Head of caudate nucleus (tissue), 42 donors: ENCODE measurements at regions of chr22 and their contacts with region 1.

Region 1: GRCh38 chr22:24525416-24526037 is 29.4 kb downstream of the GUCD1 start:
- DNase-seq: peak in 41 of 42 donors; percentile 53 to 89 (median 74)

Region 2: GRCh38 chr22:24325105-24325757 is 200.3 kb before region 1 on chr22:
- intact Hi-C with region 1: loop called (anchors 10 kb)
- DNase-seq: peak in 13 of 42 donors; percentile 15 to 65 (median 27)

Region 3: GRCh38 chr22:24433813-24434470 is 91.6 kb before region 1 on chr22:
- intact Hi-C with region 1: loop called (anchors 5 kb)
- DNase-seq: peak in 2 of 42 donors; percentile 5 to 9

Region 4: DNA sequence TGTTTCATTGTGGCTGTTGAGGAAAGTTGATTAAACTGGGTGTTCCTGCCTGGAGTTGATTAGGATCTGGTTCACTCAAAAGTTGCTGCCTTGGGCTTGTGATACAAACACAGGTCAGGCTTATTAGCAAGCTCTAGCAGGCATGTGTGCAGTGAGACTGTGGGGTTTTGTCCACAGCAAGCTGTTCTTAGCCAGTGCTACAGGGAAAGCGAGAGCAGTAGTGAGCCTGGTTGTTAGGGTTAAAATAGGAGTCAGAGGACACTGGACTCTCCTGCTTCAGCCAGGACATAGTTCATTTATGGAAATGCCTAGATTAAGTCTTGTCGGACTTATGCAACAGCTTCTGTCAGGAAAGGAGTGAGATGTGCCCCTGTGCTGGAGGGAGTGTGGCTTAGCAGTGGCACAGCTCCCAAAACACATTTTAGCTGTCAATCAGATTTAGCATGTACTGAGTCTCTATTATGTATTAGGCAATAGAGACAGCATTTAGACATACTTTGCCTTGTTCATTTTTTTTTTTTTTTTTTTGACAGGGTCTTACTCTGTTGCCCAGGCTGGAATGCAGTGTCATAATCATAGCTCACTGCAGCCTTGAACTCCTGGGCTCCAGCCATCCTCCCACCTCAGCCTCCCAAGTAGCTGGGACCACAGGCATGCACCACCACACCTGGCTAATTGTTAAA is 39.0 kb after region 1 on chr22:
- intact Hi-C with region 1: no loop called
- DNase-seq: peak in 1 of 42 donors; percentile 21

Region 5: GRCh38 chr22:24768537-24769374 is 243.2 kb after region 1 on chr22:
- intact Hi-C with region 1: no loop called
- DNase-seq: peak in 40 of 42 donors; percentile 11 to 74 (median 50)